ENCODE measurements at regions of chr1 and their contacts with region 1.

Region 1: DNA sequence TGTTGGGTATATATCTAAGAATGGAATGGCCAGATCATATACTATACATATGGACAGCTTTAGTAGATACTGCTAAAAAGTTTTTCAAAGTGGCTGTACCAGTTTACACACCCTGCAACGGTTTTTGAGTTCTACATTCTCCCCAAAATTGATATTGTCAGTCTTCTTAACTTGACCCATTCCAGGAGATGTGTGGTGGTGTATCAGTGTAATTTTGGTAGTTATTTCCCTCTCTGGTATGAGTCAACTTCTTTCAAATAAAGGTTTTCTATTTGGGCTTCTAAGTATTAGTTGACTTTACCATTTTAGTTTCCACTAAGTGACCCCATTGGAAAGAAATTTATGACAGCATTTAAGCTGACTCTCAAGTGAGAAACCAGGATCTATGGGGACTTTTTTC is 29.2 kb downstream of the INKA2 start:
- DNase-seq: no peak
- H3K4me3 Mint-ChIP-seq: no peak overlapping the region
- H3K27ac Mint-ChIP-seq: peak overlapping the region; percentile 32
- H3K4me1 Mint-ChIP-seq: peaks cover 38% of the 10 kb centered on the region
- H3K27me3 Mint-ChIP-seq: no peaks in the 10 kb centered on the region

Region 2: GRCh38 chr1:111603979-111604378 is 106.0 kb before region 1 on chr1:
- intact Hi-C with region 1: no loop called
- DNase-seq: peak; percentile 82
- H3K4me3 Mint-ChIP-seq: peak overlapping the region; percentile 80
- H3K27ac Mint-ChIP-seq: peak overlapping the region; percentile 97
- H3K4me1 Mint-ChIP-seq: peaks cover 74% of the 10 kb centered on the region
- H3K27me3 Mint-ChIP-seq: no peaks in the 10 kb centered on the region

Region 3: GRCh38 chr1:111628153-111628552 is 81.8 kb before region 1 on chr1:
- intact Hi-C with region 1: loop called (anchors 5 kb)
- DNase-seq: no peak
- H3K4me3 Mint-ChIP-seq: peak overlapping the region; percentile 63
- H3K27ac Mint-ChIP-seq: peak overlapping the region; percentile 75
- H3K4me1 Mint-ChIP-seq: peaks cover 90% of the 10 kb centered on the region
- H3K27me3 Mint-ChIP-seq: no peaks in the 10 kb centered on the region

Region 4: DNA sequence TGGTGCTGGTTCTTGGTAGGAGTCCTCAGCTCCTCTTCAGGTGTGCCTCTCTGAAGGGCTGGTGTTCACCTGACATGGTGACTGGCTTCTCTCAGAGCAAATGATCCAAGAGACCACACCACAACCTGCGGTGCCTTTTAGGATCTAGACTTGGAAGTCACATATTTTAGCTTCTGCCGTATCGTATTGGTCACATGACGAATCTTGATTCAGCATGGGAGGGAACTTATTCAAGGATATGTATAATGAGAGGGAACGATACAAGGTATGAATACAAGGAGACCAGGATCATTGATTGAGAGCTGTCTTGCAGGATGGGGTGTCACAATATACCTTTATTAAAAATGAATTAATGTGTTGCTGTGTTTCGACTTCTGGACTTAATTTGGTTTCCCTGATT is 32.4 kb before region 1 on chr1:
- intact Hi-C with region 1: loop called (anchors 2 kb)
- DNase-seq: no peak
- H3K4me3 Mint-ChIP-seq: no peak overlapping the region
- H3K27ac Mint-ChIP-seq: no peak overlapping the region
- H3K4me1 Mint-ChIP-seq: peaks cover 32% of the 10 kb centered on the region
- H3K27me3 Mint-ChIP-seq: no peaks in the 10 kb centered on the region

Region 5: DNA sequence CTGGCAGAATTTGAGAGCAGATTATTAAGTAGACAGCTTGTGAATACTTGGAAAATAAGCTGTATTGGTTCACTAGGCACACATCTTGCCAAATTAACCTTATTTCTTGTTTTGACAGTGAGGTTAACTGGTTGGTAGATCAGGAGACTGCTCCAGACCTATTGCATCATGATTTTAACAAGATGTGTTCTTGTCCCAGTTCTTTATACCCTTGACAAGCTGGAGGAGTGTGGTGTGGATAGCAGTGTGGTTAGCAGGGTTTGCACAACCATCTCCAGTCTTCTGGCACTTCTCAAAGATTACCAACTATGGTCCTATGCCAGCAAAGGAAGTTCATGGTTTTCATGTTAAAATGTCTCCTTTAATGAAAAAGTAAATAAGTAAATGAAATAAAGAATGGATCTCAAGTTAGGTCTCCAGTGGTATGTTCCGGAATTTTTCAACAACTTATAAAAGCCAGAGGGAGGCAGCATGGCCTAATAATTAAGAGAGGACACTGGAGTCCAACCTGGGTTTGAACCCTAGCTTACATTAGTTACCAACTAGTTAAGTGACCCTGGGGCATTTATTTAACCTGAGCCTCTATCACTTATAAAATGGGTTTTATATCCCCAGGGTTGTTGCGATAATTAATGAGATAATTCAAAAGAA is 79.8 kb after region 1 on chr1:
- intact Hi-C with region 1: no loop called
- DNase-seq: no peak
- H3K4me3 Mint-ChIP-seq: no peak overlapping the region
- H3K27ac Mint-ChIP-seq: no peak overlapping the region
- H3K4me1 Mint-ChIP-seq: no peaks in the 10 kb centered on the region
- H3K27me3 Mint-ChIP-seq: peaks cover 22% of the 10 kb centered on the region